ENCODE measurements at regions of chr5 and their contacts with region 1.

Region 1: GRCh38 chr5:134176511-134177368 is at the start of gene SKP1:
- DNase-seq: peak; percentile 87
- H3K4me3 Mint-ChIP-seq: peak within 1 kb of the TSS; percentile 80
- H3K27ac Mint-ChIP-seq: peak within 1 kb of the TSS; percentile 97
- H3K4me1 Mint-ChIP-seq: peaks cover 30% of the 10 kb centered on the region
- H3K27me3 Mint-ChIP-seq: peaks cover 6% of the 10 kb centered on the region
- total RNA-seq, gene SKP1: 197 to 205 TPM

Region 2: GRCh38 chr5:134091626-134092121 is 85.1 kb before region 1 on chr5:
- CTCF ChIA-PET with region 1: no interaction called
- POLR2A ChIA-PET with region 1: no interaction called
- DNase-seq: no peak
- H3K4me3 Mint-ChIP-seq: no peak overlapping the region
- H3K27ac Mint-ChIP-seq: no peak overlapping the region
- H3K4me1 Mint-ChIP-seq: peaks cover 19% of the 10 kb centered on the region
- H3K27me3 Mint-ChIP-seq: peaks cover 56% of the 10 kb centered on the region

Region 3: GRCh38 chr5:134101686-134102439 is 74.9 kb before region 1 on chr5:
- CTCF ChIA-PET with region 1: no interaction called
- POLR2A ChIA-PET with region 1: interaction called, 12 read pairs
- DNase-seq: peak; percentile 72
- H3K4me3 Mint-ChIP-seq: no peak overlapping the region
- H3K27ac Mint-ChIP-seq: no peak overlapping the region
- H3K4me1 Mint-ChIP-seq: peaks cover 47% of the 10 kb centered on the region
- H3K27me3 Mint-ChIP-seq: peaks cover 66% of the 10 kb centered on the region

Region 4: GRCh38 chr5:134145779-134146581 is 30.8 kb before region 1 on chr5:
- CTCF ChIA-PET with region 1: interaction called, 3 read pairs
- POLR2A ChIA-PET with region 1: interaction called, 32 read pairs
- DNase-seq: peak; percentile 83
- H3K4me3 Mint-ChIP-seq: no peak overlapping the region
- H3K27ac Mint-ChIP-seq: no peak overlapping the region
- H3K4me1 Mint-ChIP-seq: peaks cover 5% of the 10 kb centered on the region
- H3K27me3 Mint-ChIP-seq: no peaks in the 10 kb centered on the region

Region 5: GRCh38 chr5:134161513-134162395 is 15.0 kb before region 1 on chr5:
- CTCF ChIA-PET with region 1: no interaction called
- POLR2A ChIA-PET with region 1: interaction called, 40 read pairs
- DNase-seq: no peak
- H3K4me3 Mint-ChIP-seq: no peak overlapping the region
- H3K27ac Mint-ChIP-seq: no peak overlapping the region
- H3K4me1 Mint-ChIP-seq: peaks cover 14% of the 10 kb centered on the region
- H3K27me3 Mint-ChIP-seq: no peaks in the 10 kb centered on the region

Region 6: GRCh38 chr5:134209477-134210240 is 32.9 kb after region 1 on chr5:
- CTCF ChIA-PET with region 1: interaction called, 3 read pairs
- POLR2A ChIA-PET with region 1: interaction called, 12 read pairs
- DNase-seq: no peak
- H3K4me3 Mint-ChIP-seq: no peak overlapping the region
- H3K27ac Mint-ChIP-seq: no peak overlapping the region
- H3K4me1 Mint-ChIP-seq: peaks cover 17% of the 10 kb centered on the region
- H3K27me3 Mint-ChIP-seq: no peaks in the 10 kb centered on the region

Region 7: GRCh38 chr5:134370871-134371833 is 194.4 kb after region 1 on chr5 and contains the start of gene UBE2B:
- CTCF ChIA-PET with region 1: no interaction called
- POLR2A ChIA-PET with region 1: interaction called, 45 read pairs
- DNase-seq: peak; percentile 98
- H3K4me3 Mint-ChIP-seq: peak within 1 kb of the TSS; percentile 97
- H3K27ac Mint-ChIP-seq: peak within 1 kb of the TSS; percentile 98
- H3K4me1 Mint-ChIP-seq: peaks cover 46% of the 10 kb centered on the region
- H3K27me3 Mint-ChIP-seq: peaks cover 2% of the 10 kb centered on the region
- total RNA-seq, gene UBE2B: 115 to 116 TPM

Measured in activated CD4-positive, alpha-beta memory T cell treated with anti-CD3 and anti-CD28 coated beads, Interleukin-2, amount 10 ng/mL, durations not matched to agents 7 days and 5 days (primary cell).